HCT116 (cell line): ENCODE measurements at regions of chr4 and their contacts with region 1.

Region 1: GRCh38 chr4:44438687-44439086 is 9.9 kb downstream of the KCTD8 start:
- DNase-seq: no peak
- ATAC-seq: no peak
- H3K4me3 ChIP-seq: no peak overlapping the region
- H3K27ac ChIP-seq: no peak overlapping the region
- H3K4me1 ChIP-seq: no peaks in the 10 kb centered on the region
- H3K27me3 ChIP-seq: no peaks in the 10 kb centered on the region
- CTCF ChIP-seq: no peak
- POLR2A ChIP-seq: no peak
- RAD21 ChIP-seq: no peak

Region 2: DNA sequence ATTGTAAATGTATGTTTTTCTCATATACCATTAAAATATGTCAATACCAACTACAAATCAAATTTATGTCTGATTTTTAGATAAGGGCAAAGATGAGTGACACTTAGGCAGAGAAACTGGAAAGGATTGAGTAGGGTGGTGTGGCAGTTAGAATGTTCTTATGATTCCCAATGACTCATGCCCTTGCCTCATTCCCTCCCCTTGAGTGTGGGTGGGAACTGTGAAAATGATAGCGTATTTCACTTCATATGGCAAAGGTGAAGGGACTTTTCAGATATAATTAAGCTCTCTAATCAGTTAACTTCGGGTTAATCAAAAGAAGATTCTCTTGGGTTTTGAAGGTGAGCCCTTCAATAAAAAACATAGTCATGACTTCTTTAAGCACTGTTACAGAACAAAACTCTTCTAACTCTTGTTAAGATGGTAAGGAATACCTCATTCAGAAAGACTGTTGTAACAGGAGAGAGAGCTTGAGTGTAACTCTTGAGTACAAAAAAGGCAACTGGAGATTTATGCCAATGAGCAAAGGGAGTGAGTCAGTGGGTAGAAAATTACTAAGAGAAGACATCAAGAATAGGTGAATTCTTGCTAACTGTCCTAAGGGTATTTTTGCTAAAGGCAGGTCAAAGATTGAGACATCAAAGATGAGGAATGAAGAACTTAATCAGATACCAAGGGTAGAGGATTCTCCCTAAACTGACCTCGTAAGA is 319.6 kb before region 1 on chr4:
- CTCF ChIA-PET with region 1: no interaction called
- POLR2A ChIA-PET with region 1: no interaction called
- RAD21 ChIA-PET with region 1: no interaction called
- intact Hi-C with region 1: loop called (anchors 10 kb)
- DNase-seq: no peak
- ATAC-seq: no peak
- H3K4me3 ChIP-seq: no peak overlapping the region
- H3K27ac ChIP-seq: no peak overlapping the region
- H3K4me1 ChIP-seq: no peaks in the 10 kb centered on the region
- H3K27me3 ChIP-seq: no peaks in the 10 kb centered on the region
- CTCF ChIP-seq: no peak
- POLR2A ChIP-seq: no peak
- RAD21 ChIP-seq: no peak

Region 3: DNA sequence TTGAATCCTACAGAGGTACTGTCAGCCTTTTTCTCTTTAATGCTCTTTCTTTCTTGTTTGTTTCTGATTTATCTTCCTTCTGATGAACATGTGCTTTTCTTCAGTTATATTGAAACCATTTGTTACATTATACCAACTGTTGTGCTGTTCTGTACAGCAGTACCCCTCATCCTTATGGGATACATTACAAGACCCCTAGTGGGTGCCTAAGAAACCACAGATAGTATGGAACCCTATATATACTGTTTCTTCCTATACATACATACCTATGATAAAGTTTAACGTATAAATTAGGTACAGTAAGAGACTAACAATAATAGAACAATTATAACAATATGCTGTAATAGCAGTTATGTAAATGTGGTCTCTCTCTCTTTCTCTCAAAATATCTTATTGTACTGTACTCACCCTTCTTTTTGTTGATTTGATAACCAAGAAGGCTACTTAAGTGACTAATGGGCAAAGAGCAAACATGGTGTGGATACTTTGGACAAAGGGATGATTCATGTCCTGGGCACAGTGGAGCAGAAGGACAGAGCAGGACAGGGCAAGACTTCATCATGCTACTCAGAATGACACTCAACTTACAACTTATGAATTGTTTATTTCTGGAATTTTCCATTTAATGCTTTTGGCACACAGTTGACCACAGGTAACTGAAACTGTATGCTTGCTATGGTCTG is 223.4 kb after region 1 on chr4:
- CTCF ChIA-PET with region 1: no interaction called
- POLR2A ChIA-PET with region 1: no interaction called
- RAD21 ChIA-PET with region 1: no interaction called
- intact Hi-C with region 1: no loop called
- DNase-seq: no peak
- ATAC-seq: no peak
- H3K4me3 ChIP-seq: no peak overlapping the region
- H3K27ac ChIP-seq: no peak overlapping the region
- H3K4me1 ChIP-seq: no peaks in the 10 kb centered on the region; a peak in 1 of 4 replicates
- H3K27me3 ChIP-seq: no peaks in the 10 kb centered on the region; the same call in none of the 2 replicates
- CTCF ChIP-seq: no peak
- POLR2A ChIP-seq: no peak
- RAD21 ChIP-seq: no peak

Region 4: DNA sequence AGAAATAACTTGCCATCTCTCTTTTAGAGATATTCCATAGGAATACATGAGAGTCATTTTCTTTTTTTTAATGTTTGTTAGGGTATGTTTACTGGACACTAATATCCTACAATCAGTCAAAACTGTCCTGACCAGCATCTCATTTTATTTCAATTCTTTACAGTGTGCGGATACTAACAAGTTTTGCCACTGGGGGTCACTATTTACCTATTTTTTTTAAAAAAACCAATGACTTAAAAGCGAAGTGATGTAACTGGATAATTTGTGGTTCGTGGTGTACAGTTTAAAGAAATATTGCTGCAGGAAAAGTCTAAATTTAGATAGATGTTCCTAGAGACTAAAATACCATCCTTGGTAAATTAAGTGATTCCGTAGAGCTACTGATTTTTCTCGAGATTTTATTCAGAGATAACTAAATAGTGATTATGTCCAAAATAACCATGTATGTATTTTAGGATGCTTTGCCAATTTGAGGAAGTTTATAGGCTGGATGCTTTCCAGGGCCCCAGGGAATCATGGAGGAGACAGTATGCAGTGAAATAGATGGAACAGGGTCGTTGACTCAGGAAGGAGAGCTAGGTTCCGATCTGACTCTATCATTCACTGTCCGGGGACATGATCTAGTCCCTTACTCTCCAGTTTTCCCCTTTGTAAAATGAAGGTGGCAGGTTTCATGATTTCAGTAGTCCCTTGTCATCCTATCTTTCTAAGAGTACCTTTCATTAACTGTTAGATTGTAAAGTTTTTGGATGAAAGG is 321.6 kb after region 1 on chr4:
- CTCF ChIA-PET with region 1: no interaction called
- POLR2A ChIA-PET with region 1: no interaction called
- RAD21 ChIA-PET with region 1: no interaction called
- intact Hi-C with region 1: no loop called
- DNase-seq: peak; percentile 19
- ATAC-seq: peak; percentile 67
- H3K4me3 ChIP-seq: no peak overlapping the region
- H3K27ac ChIP-seq: no peak overlapping the region
- H3K4me1 ChIP-seq: no peaks in the 10 kb centered on the region
- H3K27me3 ChIP-seq: no peaks in the 10 kb centered on the region
- CTCF ChIP-seq: peak; percentile 10 to 71 (median 33); a peak in 4 of 6 replicates
- POLR2A ChIP-seq: no peak
- RAD21 ChIP-seq: peak; percentile 37